ENCODE measurements at regions of chr10 and their contacts with region 1.

Region 1: GRCh38 chr10:28577506-28577905 is 44.6 kb downstream of the WAC start:
- DNase-seq: no peak
- ATAC-seq: no peak
- H3K4me3 ChIP-seq: no peak overlapping the region
- H3K4me3 Mint-ChIP-seq: peak overlapping the region; percentile 35
- H3K27ac ChIP-seq: no peak overlapping the region
- H3K27ac Mint-ChIP-seq: peak overlapping the region; percentile 68 to 78
- H3K4me1 ChIP-seq: peaks cover 13% of the 10 kb centered on the region
- H3K4me1 Mint-ChIP-seq: peaks cover 84 to 93% of the 10 kb centered on the region in 2 donors
- H3K27me3 ChIP-seq: no peaks in the 10 kb centered on the region
- H3K27me3 Mint-ChIP-seq: no peaks in the 10 kb centered on the region
- CTCF ChIP-seq: no peak

Region 2: DNA sequence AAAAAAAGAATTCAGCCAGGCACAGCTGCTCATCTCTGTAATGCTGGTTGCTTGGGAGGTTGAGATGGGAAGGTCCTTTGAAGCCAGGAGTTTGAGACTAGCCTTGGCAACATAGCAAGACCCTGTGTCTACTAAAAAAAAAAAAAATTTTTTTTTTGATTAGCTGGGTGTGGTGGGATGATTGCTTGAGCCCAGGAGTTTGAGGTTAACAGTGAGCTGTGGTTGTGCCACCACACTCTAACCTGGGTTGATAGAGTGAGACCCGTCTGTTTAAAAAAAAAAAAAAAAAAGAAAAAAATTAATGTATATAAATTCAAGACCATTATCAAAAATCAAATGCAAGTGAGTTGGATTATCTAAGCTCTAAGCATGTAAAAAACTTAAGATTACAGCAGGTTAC is 38.9 kb before region 1 on chr10:
- intact Hi-C with region 1: loop called (anchors 5 kb)
- DNase-seq: peak in 1 of 2 donors; percentile 28
- ATAC-seq: peak in 1 of 3 donors; percentile 25
- H3K4me3 ChIP-seq: no peak overlapping the region
- H3K4me3 Mint-ChIP-seq: peak overlapping the region; percentile 25
- H3K27ac ChIP-seq: no peak overlapping the region
- H3K27ac Mint-ChIP-seq: peak overlapping the region in 1 of 2 donors; percentile 73
- H3K4me1 ChIP-seq: peaks cover 17% of the 10 kb centered on the region
- H3K4me1 Mint-ChIP-seq: peaks cover 64 to 75% of the 10 kb centered on the region in 2 donors
- H3K27me3 ChIP-seq: no peaks in the 10 kb centered on the region
- H3K27me3 Mint-ChIP-seq: no peaks in the 10 kb centered on the region
- CTCF ChIP-seq: no peak

Measured in natural killer cell (primary cell).